PC-3 (cell line): ENCODE measurements at regions of chr11 and their contacts with region 1.

Region 1: DNA sequence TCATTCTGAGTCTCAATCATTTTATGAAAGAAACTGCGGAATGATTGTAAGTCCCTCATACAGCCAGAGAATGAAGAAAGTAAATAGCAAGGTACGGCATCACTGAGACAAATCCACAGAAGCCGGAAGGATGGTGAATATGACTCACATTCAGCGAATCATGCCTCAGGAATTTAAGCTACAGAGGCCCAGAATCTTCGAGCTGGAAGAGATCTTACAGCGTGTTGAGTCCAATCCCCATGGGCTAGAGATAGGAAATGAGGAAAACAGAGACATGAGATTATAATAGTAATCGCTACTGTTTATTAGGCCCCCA is 173.2 kb downstream of the KIF18A start:
- DNase-seq: peak; percentile 95
- ATAC-seq: peak; percentile 89
- H3K4me3 ChIP-seq: peak overlapping the region; percentile 33; the same call in 1 of the 2 replicates
- H3K27ac ChIP-seq: peak overlapping the region; percentile 95
- H3K4me1 ChIP-seq: peaks cover 29% of the 10 kb centered on the region
- H3K27me3 ChIP-seq: no peaks in the 10 kb centered on the region
- CTCF ChIP-seq: no peak

Region 2: GRCh38 chr11:27331981-27332380 is 602.8 kb before region 1 on chr11:
- CTCF ChIA-PET with region 1: no interaction called
- POLR2A ChIA-PET with region 1: no interaction called
- intact Hi-C with region 1: no loop called
- DNase-seq: no peak
- ATAC-seq: peak; percentile 46; the same call in 1 of the 2 replicates
- H3K4me3 ChIP-seq: no peak overlapping the region
- H3K27ac ChIP-seq: no peak overlapping the region
- H3K4me1 ChIP-seq: no peaks in the 10 kb centered on the region
- H3K27me3 ChIP-seq: no peaks in the 10 kb centered on the region
- CTCF ChIP-seq: no peak

Region 3: DNA sequence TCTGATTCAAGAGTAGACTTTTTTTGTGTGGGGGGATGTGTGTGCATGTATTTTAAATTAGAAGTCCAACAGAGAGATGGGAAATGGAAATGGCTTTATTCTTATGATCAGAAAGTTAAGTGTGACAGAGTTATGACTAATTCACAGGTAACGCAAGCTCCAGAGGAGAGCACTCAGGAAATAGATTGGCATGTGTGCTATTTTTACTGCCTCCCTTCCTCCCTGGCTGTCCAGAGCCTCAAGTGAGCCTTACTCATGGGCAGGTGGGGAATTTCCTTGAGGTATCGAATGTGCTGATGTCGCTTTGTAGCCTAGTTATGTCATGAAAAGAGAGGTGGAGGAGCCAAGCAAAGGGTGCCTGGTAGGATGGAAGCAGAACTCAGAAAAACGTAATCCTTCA is 164.2 kb before region 1 on chr11:
- CTCF ChIA-PET with region 1: no interaction called
- POLR2A ChIA-PET with region 1: no interaction called
- intact Hi-C with region 1: loop called (anchors 2 kb)
- DNase-seq: peak; percentile 89
- ATAC-seq: peak; percentile 97
- H3K4me3 ChIP-seq: no peak overlapping the region
- H3K27ac ChIP-seq: peak overlapping the region; percentile 29
- H3K4me1 ChIP-seq: peaks cover 20% of the 10 kb centered on the region
- H3K27me3 ChIP-seq: no peaks in the 10 kb centered on the region
- CTCF ChIP-seq: no peak

Region 4: DNA sequence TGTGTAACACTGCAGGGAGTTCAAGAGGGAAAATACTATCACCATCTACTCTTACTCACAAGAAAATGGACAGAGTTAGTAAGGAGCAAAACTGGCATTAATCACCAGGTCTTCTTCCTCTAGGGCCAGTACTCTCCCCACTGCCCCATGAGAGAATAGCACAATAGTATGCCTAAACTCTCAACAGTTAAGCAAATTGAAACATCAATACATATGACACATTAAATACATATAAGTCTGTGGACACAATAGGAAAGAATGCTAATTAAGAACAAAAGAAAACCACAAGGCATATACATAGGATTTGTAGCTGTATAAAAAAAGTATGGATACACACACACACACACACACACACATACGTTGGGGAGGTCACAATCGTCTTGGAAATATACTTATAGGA is 36.6 kb before region 1 on chr11:
- CTCF ChIA-PET with region 1: no interaction called
- POLR2A ChIA-PET with region 1: interaction called, 3 read pairs
- intact Hi-C with region 1: loop called (anchors 2 kb)
- DNase-seq: peak; percentile 71
- ATAC-seq: peak; percentile 91
- H3K4me3 ChIP-seq: no peak overlapping the region
- H3K27ac ChIP-seq: peak overlapping the region; percentile 43
- H3K4me1 ChIP-seq: peaks cover 27% of the 10 kb centered on the region
- H3K27me3 ChIP-seq: no peaks in the 10 kb centered on the region
- CTCF ChIP-seq: no peak

Region 5: GRCh38 chr11:27904358-27905055 is 30.3 kb before region 1 on chr11:
- CTCF ChIA-PET with region 1: no interaction called
- POLR2A ChIA-PET with region 1: interaction called, 3 read pairs
- intact Hi-C with region 1: loop called (anchors 1 kb)
- DNase-seq: peak; percentile 85
- ATAC-seq: peak; percentile 78
- H3K4me3 ChIP-seq: peak overlapping the region; percentile 39; the same call in 1 of the 2 replicates
- H3K27ac ChIP-seq: peak overlapping the region; percentile 97
- H3K4me1 ChIP-seq: peaks cover 53% of the 10 kb centered on the region
- H3K27me3 ChIP-seq: no peaks in the 10 kb centered on the region
- CTCF ChIP-seq: no peak